ENCODE measurements at regions of chr16 and their contacts with region 1.

Region 1: DNA sequence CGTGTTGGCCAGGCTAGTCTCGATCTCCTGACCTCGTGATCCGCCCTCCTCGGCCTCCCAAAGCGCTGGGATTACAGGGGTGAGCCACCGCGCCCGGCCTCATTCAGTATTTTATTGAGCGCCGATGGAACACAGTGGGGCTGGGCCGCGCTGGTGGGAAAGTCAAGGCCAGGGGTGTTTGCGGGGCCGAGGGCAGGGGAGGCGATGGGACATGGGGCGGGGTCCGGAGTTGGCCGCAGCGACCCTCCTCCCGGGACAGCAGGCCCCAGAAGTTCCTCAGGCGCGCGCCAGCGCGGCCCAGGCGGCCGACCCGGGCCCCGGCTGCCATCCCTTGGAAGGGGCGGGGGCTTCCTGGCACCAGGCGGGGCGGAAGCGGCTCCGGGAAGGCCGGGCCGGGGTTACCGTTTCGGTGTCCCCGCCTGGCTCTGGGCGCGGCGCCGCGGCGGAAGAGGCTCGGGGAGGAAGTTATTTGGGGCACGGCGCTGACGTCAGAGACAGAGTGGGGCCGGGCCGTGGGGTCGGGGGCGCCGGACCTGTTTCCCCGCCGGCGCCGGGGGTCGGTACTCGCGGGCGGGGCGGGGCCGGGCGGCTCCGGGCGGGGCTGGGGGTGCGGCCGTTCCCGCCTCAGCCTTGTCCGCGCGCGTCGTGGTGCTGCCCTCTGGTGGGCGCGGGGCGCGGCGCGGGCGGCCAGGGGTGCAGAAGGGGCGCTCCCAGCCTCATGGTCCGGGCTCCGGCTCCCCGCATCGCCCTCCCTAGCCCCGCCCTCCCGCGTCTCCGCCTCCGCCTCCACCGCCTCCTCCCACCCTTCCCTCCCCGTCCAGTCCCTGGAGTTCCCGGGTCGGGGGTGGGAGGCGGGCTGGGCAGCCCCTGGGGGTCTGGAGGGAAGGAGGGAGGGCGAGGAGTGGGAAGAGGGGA is 952 bp upstream of the PRSS27 start:
- DNase-seq: peak; percentile 95
- ATAC-seq: peak; percentile 91
- H3K4me3 Mint-ChIP-seq: peak overlapping the region; percentile 77
- H3K27ac Mint-ChIP-seq: peak overlapping the region; percentile 83
- H3K4me1 Mint-ChIP-seq: no peaks in the 10 kb centered on the region
- H3K27me3 Mint-ChIP-seq: peaks cover 9% of the 10 kb centered on the region

Region 2: DNA sequence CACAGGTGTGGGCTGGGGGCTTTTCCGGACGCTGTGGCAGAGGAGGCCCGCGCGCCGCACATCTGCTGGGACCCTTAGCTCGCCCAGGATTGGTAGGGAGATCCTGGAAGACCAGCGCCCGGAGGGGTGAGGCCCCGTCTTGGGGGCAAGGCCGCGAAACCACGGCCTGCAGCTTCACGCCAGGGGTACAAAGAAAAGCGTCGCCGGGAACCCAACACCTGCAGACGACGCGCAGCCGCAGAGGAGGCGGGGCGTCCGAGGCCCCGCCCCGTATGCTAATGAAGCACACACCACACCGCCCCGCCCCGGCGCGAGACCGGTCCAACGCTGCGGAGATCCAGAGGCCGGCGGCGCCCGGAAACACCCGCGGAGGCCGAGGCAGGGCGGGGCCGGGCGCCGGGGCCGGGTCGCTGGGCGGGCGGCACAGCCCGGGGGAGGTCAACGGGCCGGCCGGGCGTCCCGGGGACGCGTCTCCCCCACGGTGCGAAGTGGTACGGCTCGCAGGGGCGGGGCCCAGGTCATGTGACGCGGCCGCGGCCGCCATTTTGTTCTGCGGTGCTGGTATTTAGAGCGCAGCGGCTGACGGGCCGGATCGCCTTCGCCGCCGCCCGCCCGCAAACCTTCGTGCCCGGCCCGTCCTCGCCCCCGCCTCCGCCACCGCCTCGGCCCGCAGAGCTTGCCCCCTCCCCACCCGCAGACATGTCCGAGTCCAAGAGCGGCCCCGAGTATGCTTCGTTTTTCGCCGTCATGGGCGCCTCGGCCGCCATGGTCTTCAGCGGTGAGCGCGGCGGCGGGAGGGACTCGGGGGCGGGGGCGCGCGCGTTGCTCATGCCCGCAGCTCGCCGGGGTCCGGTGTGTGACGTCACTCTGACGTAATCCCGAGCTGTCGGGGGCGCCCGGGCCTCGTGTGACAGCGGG is 207.3 kb before region 1 on chr16 and contains the start of gene ATP6V0C:
- CTCF ChIA-PET with region 1: no interaction called
- POLR2A ChIA-PET with region 1: no interaction called
- intact Hi-C with region 1: loop called in 1 of 2 experiments (anchors 1 kb)
- DNase-seq: peak; percentile 95
- ATAC-seq: peak; percentile 90
- H3K4me3 Mint-ChIP-seq: peak within 1 kb of the TSS; percentile 93
- H3K27ac Mint-ChIP-seq: peak within 1 kb of the TSS; percentile 95
- H3K4me1 Mint-ChIP-seq: peaks cover 44% of the 10 kb centered on the region
- H3K27me3 Mint-ChIP-seq: no peaks in the 10 kb centered on the region
- total RNA-seq, gene ATP6V0C: 91.7 to 130 TPM

Region 3: DNA sequence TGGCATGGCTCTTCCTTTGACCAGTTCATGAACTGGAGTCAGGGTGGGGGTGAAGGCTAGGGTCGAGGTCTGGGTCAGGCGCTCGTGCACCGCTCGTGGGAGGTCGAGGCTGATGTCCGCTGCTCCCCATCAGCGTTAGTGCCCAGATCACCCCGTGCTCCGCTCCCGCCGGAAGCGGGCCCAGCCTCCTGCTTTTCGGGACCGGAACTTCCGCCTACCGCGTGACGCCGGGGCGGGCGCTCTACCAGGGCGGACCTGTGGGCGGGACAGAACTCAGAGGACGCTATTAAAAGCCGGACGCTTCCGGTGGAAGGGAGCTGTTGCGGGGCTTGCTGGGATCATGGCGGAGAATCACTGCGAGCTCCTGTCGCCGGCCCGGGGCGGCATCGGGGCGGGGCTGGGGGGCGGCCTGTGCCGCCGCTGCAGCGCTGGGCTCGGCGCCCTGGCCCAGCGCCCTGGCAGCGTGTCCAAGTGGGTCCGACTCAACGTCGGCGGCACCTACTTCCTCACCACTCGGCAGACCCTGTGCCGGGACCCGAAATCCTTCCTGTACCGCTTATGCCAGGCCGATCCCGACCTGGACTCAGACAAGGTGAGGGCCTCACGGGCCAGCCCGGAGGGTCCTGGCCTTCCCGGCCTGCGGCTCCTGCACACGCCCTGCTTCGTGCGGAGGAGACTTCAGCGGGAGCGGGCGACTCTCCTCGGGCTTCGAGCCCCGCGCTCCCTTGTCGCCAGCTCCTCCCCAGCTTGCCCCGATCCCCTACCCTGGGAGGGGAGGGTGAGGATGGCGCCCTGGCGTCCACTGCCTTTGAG is 38.6 kb before region 1 on chr16 and contains the start of gene KCTD5:
- CTCF ChIA-PET with region 1: interaction called, 3 read pairs
- POLR2A ChIA-PET with region 1: no interaction called
- intact Hi-C with region 1: loop called (anchors 1 kb)
- DNase-seq: peak; percentile 98
- ATAC-seq: peak; percentile 92
- H3K4me3 Mint-ChIP-seq: peak within 1 kb of the TSS; percentile 100
- H3K27ac Mint-ChIP-seq: peak within 1 kb of the TSS; percentile 98
- H3K4me1 Mint-ChIP-seq: peaks cover 28% of the 10 kb centered on the region
- H3K27me3 Mint-ChIP-seq: no peaks in the 10 kb centered on the region
- total RNA-seq, gene KCTD5: 24.0 to 26.2 TPM

Region 4: DNA sequence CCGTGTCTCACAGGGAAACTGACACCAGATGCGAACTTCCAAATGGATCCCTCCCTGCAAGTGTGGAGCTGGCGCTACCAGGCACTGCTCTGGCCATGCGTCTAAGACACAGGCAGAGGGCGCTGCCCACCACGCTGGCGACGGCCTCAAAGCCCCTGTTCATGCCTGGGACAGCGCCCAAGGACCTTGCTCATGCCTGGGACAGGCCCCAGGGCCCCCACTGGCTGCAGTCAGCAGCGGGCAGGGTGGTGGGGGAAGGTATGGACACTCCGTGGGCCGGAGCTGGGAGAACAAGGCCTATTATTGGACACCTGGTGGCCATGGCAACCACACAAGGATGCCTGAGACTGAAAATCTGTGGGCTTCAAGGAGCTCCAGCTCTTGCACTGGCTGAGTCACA is 118.0 kb after region 1 on chr16:
- CTCF ChIA-PET with region 1: no interaction called
- POLR2A ChIA-PET with region 1: no interaction called
- intact Hi-C with region 1: loop called in 1 of 2 experiments (anchors 1 kb)
- DNase-seq: peak; percentile 77
- ATAC-seq: peak; percentile 67
- H3K4me3 Mint-ChIP-seq: no peak overlapping the region
- H3K27ac Mint-ChIP-seq: no peak overlapping the region
- H3K4me1 Mint-ChIP-seq: peaks cover 31% of the 10 kb centered on the region
- H3K27me3 Mint-ChIP-seq: peaks cover 3% of the 10 kb centered on the region

Region 5: DNA sequence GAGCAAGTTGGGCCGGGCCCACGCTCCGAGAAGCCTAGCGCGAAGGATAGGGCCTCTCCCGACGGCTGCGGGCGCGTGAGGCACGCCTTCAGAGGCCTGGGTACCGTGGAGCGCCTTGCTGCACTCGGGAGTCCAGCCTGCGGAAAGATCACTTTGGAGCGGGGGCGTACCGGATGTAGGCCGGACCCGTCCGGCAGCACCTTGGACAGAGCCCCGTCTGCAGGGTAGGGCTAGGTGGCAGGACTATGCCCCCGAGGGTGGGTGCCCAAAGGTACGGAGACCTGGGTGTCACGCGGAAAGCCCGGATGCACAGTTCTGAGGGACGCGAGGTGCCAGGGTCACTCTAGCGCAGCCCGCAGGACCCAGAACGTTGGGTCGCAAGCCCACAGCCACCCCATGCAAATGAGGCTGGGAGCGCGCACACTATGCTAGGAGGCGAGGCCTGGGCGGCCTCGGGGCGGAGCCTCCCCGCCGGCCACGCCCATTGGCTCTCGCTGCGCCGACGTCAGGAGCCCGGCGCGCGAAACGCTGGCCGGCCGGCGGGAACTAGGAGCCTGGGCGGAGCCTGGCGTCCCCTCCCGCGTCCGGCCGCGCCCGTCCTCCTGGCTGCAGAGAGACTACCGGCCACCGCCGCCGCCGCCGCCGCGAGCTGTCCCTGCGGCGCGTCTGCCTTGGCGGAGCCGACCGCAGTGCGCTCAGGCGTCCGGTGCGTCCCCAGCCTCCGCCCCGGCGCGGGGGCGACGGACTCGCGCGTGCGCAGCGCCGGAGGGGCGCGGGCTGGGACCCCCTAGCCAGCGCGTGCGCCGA is 248.0 kb after region 1 on chr16 and contains the start of gene PAQR4:
- CTCF ChIA-PET with region 1: interaction called, 3 read pairs
- POLR2A ChIA-PET with region 1: no interaction called
- intact Hi-C with region 1: loop called in 1 of 2 experiments (anchors 1 kb)
- DNase-seq: peak; percentile 90
- ATAC-seq: peak; percentile 75
- H3K4me3 Mint-ChIP-seq: peak within 1 kb of the TSS; percentile 72
- H3K27ac Mint-ChIP-seq: peak within 1 kb of the TSS; percentile 25
- H3K4me1 Mint-ChIP-seq: peaks cover 31% of the 10 kb centered on the region
- H3K27me3 Mint-ChIP-seq: peaks cover 21% of the 10 kb centered on the region
- total RNA-seq, gene PAQR4: 28.7 to 31.2 TPM

Measured in activated CD4-positive, alpha-beta T cell treated with anti-CD3 and anti-CD28 coated beads for 36 hours (primary cell).